GM10248 (cell line): ENCODE measurements at regions of chr5 and their contacts with region 1.

Region 1: GRCh38 chr5:96868603-96869371 is 7.5 kb upstream of the ERAP2 start:
- DNase-seq: peak; percentile 53
- CTCF ChIP-seq: peak; percentile 94

Region 2: DNA sequence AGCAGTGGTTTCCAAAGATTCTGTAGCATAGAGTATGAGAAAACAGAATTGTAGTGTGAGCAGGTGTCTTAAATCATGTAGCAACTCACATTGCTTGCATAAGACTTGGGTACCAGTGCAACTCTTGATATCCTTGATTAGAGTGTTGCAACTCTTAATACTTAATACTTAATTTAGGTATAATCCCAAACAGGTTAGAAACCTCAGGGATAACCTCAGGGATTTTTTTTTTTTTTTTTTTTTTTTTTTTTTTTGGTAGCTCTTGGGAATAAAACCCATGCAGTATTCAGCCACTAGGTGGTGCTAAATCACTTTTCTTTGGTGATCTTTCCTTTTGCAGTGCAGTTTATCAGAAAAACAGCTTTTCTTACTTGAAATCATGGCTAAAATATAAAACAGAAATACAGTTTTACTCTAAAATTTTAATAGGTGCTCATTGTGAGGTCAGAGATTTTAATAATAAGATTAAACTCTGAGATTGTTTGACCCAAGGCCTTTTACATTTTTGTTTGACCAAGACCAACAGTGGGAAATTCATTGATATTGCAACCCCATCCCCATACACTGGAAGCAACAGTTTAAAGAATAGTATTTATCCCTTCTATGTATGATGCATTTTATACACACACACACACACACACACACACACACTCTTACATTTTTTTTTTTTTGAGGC is 116.3 kb before region 1 on chr5:
- CTCF ChIA-PET with region 1: interaction called, 15 read pairs
- POLR2A ChIA-PET with region 1: no interaction called
- DNase-seq: peak; percentile 38
- CTCF ChIP-seq: peak; percentile 48

Region 3: DNA sequence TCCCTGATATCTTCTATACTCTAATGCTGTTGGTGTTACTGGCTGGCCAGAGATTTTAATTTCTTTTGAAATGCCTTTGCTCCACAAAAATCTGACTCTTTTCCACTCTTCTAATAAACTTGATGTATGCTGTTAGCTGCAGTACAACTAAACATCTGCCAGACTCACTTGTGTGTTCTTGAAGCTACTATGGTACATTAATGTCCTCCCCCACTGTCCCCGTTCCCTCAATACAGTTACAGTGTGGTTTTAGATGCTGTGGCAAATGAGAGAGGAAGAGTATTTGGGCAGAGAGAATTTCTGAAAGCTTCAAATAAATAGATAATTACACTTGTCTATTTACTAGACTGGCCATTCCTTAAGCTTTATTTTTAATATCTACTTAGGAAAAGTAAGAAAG is 42.7 kb before region 1 on chr5:
- CTCF ChIA-PET with region 1: interaction called, 10 read pairs
- POLR2A ChIA-PET with region 1: no interaction called
- DNase-seq: no peak
- CTCF ChIP-seq: no peak

Region 4: DNA sequence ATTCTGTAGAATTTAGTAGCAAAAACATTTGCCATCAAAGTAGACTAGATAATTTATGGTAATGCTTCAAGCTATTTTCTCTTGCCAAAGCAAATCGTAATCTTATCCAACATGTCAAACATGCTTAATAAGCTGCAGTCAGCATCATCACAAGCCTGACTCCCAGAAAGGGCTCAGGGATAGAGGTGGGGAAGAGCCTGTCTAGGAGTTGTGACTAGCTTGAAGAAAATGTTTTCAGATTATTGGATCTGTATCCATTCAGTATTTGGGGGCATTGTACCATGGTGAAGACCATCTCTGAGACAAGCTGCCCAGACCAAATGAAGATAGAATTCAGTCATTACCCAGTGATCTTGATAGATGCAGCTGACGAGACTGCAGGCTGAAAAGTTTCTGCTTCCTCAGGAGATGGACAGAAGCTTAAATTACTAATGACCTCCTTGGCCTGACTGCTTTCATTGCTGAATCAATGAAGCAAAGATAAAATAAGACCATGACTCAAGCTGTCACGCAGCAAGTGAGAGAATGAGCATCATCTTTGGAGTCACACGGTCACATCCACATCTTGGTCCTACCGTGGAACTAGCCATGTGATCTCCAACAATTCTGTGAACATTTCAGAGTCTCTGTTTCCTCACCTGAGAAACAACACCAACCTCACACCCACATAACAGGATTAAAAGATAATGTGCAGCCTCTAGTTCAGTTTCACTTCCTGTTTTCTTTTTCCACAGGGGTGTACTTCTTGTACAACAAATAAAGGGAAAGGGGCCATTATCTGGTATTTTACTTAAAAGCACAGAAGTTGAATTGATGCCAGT is 16.9 kb after region 1 on chr5:
- CTCF ChIA-PET with region 1: interaction called, 116 read pairs
- POLR2A ChIA-PET with region 1: no interaction called
- DNase-seq: peak; percentile 37
- CTCF ChIP-seq: no peak

Region 5: DNA sequence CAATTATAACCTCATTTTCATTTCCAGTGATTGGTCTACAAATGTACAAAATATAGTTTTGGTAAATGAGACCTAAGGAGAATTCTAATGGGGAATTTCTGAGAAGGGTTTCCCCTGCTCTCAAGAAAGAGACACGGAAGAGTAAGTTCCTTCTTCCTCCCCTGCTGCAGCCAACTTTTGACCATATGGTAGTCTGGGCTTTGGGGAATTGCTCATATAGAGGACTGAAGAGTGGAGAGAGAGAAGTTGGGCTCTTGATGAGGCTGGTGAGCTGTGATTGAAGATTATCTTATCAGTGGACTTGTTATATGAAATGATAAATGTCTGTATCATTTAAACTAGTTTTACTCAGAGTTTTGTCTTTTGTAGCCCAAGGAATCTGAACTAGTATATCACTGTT is 62.8 kb after region 1 on chr5:
- CTCF ChIA-PET with region 1: interaction called, 11 read pairs
- POLR2A ChIA-PET with region 1: no interaction called
- DNase-seq: peak; percentile 18
- CTCF ChIP-seq: no peak

Region 6: GRCh38 chr5:96978812-96979449 is 110.1 kb after region 1 on chr5:
- CTCF ChIA-PET with region 1: interaction called, 19 read pairs
- POLR2A ChIA-PET with region 1: no interaction called
- DNase-seq: no peak
- CTCF ChIP-seq: no peak

Region 7: GRCh38 chr5:97071101-97071500 is 202.3 kb after region 1 on chr5:
- CTCF ChIA-PET with region 1: no interaction called
- POLR2A ChIA-PET with region 1: no interaction called
- DNase-seq: no peak
- CTCF ChIP-seq: no peak

Region 8: DNA sequence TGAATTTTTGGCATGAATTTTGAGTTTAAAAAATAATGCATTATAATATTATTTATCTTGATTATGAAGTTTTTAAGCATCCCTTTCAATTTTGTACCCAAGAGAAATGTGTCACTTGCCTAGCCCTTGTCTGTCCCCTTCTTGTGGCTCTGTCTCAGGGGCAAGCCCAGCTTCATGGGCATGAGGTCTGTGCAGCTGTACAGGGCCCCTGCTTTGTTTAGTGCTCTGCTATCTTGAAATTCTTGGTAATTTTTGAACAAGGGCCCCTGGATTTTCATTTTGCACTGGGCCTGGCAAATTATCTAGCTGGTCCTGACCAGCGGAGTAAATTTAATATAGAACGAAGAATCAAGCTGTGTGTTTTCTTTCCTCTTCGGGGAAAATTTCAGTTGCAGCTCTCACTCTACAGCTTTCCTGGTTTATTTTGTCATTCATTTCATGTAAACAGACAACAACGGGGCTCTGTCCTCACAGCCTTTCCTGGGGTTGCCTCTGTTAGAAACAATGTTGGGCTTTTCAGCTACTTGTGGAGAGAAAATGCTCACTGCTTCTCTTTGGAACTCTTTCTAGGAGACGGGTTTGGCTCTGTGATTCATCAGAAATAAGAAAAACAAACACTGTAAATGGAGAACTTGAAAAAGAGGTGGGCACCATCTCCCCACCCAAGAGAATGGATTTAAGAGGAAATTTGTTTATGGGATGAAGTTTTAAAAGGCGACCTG is 232.6 kb after region 1 on chr5:
- CTCF ChIA-PET with region 1: no interaction called
- POLR2A ChIA-PET with region 1: no interaction called
- DNase-seq: no peak
- CTCF ChIP-seq: no peak

Region 9: GRCh38 chr5:97162045-97162444 is 293.3 kb after region 1 on chr5:
- CTCF ChIA-PET with region 1: interaction called, 99 read pairs
- POLR2A ChIA-PET with region 1: no interaction called
- DNase-seq: peak; percentile 15
- CTCF ChIP-seq: peak; percentile 80

Region 10: DNA sequence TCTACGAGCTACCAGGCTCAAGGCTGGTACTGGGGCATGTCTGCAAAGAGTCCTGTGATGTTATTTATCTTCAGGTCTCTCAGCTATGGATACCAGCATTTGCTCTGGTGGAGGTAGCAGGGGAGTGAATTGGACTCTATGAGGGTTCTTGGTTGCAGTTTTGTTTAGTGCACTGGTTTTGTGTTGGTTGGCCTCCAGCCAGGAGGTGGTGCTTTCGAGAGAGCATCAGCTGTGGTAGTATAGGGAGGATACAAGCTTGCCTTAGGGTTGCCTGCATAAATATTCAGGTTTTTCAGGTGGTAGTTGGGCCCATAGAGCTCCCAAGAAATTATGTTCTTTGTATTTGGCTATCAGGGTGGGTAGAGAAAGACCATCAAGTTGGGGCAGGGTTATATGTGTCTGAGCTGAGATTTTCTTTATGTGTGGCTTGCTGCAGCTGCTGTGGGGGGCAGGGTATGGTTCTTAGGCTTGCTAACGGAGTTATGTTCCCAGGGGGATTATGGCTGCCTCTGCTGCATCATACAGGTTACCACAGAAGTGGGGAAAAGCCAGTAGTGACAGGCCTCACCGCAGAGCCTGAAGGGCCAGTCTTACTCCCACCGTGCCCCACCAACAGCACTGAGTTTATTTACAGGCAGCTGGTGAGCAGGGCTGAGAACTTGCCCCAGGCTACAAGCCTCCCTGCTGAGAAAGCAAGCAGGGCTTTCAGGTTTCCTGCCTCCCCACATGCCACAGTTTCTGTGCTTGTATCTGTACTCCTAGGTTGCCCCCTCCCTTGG is 324.0 kb after region 1 on chr5:
- CTCF ChIA-PET with region 1: no interaction called
- POLR2A ChIA-PET with region 1: no interaction called
- DNase-seq: no peak
- CTCF ChIP-seq: no peak